ENCODE measurements at regions of chr10 and their contacts with region 1.

Region 1: DNA sequence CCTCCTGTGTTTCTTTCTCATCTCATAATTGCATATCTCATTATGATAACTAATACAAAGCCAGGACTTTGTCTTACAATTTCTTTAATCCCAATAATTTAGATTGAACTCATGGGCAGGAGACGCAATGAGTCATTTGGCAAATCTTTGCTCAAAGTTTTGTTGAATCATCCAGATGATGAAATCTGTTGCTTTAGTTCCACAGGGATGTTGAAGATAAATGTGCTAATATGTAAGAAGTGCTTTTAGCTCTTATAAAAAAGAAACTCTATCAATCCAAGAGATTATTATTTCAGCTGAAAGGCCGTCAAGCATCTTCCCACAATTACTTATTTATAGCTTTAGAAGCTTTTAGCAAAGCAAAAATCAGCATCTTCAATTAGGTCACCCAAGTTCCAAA is 36.7 kb upstream of the ANK3 start:
- DNase-seq: no peak
- ATAC-seq: no peak

Region 2: DNA sequence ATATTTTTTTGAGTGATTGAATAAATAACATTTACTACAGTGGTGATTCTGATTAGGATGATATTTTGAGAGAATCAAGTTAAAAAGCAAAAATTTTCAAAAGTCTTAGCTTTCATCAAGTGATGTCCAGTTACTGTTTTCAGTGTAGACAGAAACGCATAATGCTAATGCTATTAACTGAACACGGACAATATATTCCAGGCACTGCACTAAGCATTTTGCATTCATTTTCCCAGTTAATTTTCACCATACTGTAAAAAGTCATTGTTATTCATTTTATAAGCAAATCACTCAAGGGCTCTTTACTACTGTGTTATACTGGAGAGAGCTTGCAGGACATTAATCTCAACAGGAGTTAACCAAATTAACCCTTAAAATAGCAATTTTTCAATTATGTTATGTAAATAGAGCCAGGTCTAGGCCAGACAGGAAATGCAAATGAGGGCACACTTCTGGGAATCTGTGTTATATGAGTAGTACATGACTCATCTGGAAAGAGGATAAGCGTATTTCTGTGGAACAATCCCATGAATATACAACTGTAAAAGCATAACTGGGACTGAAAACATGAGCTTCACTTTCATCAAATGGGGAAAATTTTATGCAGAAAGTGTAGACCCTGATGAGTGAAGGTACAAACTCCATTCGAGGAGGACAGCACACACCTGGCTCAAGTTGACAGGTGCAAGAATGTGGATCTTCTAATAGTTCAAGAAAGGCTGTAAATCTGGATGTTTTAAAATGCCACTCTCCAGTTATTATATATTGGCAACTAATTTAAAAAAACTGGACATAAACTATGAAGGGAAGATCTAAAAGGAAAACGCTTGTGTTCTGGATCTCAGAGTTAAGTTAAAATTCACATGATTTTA is 112.1 kb before region 1 on chr10:
- intact Hi-C with region 1: loop called (anchors 5 kb)
- DNase-seq: no peak
- ATAC-seq: no peak

Measured in Right ventricle myocardium inferior (tissue), 1 donor.